ENCODE measurements at regions of chr6 and their contacts with region 1.

Region 1: DNA sequence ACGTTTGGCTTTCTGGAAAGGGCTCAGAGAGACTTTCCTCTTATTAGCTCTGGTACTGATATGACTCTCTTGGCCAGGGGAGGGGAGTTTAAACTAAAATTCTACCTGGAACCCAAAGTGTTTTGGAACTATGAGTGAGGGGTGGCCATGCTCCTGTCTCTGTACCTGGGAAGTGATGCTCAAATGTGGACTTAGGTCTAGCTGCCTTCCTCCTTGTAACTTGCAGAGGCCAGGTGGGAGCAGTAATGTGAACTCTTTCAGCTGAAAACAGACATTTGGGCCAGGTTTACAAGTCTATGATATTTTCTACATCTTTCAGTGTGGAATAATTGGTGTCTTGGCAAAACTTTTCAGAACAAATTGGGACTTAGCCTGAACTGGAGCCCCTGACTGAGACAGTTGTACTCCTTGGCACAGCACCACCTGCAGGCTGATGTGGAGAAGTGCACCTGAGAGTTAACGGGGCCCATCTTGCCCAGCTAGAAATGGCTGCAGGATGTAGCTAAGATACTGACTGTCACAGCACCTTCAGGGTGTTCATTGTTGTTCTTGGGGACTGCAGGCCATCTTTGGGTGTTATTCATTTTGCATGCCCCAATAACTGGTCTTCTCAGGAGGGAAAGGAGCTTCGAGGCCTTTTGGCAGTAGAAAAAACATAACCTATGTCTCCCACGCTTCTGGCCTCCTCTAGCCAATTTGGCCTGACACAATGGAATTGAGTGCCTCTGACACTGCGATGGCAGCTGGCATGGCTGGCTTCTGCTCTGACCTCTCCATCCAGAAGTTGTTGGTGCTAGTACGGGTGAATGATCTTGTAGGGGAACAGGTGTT is 37.1 kb downstream of the CD109 start:
- H3K4me3 ChIP-seq: no peak overlapping the region
- H3K27ac ChIP-seq: no peak overlapping the region
- H3K4me1 ChIP-seq: no peaks in the 10 kb centered on the region
- CTCF ChIP-seq: peak; percentile 60

Region 2: DNA sequence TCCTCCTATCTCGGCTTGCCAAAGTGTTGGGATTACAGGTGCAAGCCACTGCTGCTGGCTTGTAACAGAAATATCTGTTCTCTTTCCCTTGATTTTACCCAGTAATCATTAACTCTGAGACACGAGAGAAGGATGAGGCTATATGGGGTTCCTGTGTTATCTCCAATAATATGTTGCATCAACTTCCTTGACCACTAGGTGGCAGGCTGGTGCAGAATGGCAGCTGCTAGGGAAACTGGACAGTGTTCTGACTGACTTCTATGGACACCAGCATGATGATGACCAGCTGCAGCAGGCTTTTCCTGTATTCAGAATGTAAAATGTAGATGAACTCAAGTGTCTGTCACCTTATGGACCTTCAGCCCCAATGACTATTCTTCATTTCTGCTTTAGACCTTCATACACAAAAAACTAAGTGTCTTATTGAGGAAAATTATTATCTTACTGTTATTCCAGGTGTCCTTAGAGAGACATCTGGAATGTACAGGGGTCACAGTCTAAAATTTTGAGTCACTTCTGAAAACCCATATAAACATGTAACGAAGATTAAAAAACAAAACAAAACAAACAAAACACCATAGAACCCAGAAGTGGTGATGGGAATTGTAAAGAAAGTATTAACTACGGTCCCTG is 57.5 kb before region 1 on chr6:
- CTCF ChIA-PET with region 1: interaction called, 179 read pairs
- POLR2A ChIA-PET with region 1: no interaction called
- H3K4me3 ChIP-seq: no peak overlapping the region
- H3K27ac ChIP-seq: no peak overlapping the region
- H3K4me1 ChIP-seq: no peaks in the 10 kb centered on the region
- CTCF ChIP-seq: peak; percentile 67

Region 3: DNA sequence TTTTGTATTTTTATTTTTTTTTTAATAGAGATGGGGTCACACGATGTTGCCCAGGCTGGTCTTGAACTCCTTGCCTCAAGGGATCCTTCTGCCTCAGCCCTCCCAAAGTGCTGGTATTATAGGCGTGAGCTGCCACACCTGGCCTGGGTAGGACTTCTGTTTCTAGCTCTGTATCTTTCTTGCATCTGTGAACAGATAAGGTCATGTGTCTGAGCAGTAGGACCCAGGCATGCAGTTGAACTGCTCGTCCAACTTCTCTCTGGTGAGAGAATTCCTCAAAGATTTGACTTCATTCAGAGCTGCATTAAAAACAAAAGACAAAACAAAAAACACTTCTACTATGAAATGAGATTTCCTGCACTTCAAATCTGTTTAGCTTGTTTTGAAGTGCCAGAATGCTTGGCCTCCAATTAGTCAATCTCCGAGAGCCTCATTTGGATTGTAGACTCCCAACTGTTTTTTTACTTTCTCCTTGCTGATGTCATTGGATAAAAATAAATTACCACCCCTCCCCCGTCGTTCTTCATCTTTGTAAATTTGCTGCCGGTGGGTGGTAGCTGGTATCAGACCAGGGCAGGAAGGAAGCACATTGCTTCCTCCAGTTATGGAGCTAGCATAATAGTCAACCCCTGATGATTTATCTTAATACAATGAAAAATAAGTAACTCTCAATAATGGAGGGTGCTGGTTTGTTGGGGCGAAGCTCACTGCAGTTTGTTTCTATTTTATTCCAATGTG is 19.5 kb before region 1 on chr6:
- CTCF ChIA-PET with region 1: interaction called, 40 read pairs
- POLR2A ChIA-PET with region 1: no interaction called
- H3K4me3 ChIP-seq: no peak overlapping the region
- H3K27ac ChIP-seq: no peak overlapping the region
- H3K4me1 ChIP-seq: peaks cover 14% of the 10 kb centered on the region
- CTCF ChIP-seq: no peak

Region 4: DNA sequence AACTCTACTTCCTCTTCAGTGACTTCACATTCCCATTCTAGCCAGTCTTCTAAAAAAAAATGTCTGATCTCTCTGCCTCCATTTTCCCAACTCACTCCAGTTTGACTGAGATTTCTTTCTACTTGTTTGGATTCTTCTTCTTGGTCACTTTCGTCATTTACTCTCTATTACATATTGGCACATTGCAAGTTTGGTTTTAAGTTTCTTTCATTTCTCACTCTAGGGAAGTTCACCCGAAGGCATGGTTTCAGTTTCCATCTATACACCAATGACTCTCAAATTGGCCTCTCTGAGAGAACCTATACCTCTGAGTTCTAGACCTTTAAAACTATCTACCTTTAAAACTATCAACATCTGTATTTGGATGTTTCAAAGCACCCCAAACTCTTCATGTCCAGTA is 14.2 kb after region 1 on chr6:
- CTCF ChIA-PET with region 1: interaction called, 16 read pairs
- POLR2A ChIA-PET with region 1: interaction called, 3 read pairs
- H3K4me3 ChIP-seq: no peak overlapping the region
- H3K27ac ChIP-seq: no peak overlapping the region
- H3K4me1 ChIP-seq: no peaks in the 10 kb centered on the region
- CTCF ChIP-seq: no peak

Region 5: GRCh38 chr6:73803562-73804241 is 70.6 kb after region 1 on chr6:
- CTCF ChIA-PET with region 1: interaction called, 11 read pairs
- POLR2A ChIA-PET with region 1: no interaction called
- H3K4me3 ChIP-seq: no peak overlapping the region
- H3K27ac ChIP-seq: no peak overlapping the region
- H3K4me1 ChIP-seq: 0 out of 2 replicates have a peak, but pooled peaks cover 2% of the 10 kb centered on the region
- CTCF ChIP-seq: 0 out of 2 replicates have a peak, but pooled peaks have one; percentile 30

Region 6: GRCh38 chr6:73832313-73832712 is 99.3 kb after region 1 on chr6:
- CTCF ChIA-PET with region 1: no interaction called
- POLR2A ChIA-PET with region 1: no interaction called
- H3K4me3 ChIP-seq: no peak overlapping the region
- H3K27ac ChIP-seq: no peak overlapping the region
- H3K4me1 ChIP-seq: no peaks in the 10 kb centered on the region
- CTCF ChIP-seq: no peak

Measured in HEK293 (cell line).